Ascending aorta (tissue), 2 donors: ENCODE measurements at regions of chr17 and their contacts with region 1.

Region 1: DNA sequence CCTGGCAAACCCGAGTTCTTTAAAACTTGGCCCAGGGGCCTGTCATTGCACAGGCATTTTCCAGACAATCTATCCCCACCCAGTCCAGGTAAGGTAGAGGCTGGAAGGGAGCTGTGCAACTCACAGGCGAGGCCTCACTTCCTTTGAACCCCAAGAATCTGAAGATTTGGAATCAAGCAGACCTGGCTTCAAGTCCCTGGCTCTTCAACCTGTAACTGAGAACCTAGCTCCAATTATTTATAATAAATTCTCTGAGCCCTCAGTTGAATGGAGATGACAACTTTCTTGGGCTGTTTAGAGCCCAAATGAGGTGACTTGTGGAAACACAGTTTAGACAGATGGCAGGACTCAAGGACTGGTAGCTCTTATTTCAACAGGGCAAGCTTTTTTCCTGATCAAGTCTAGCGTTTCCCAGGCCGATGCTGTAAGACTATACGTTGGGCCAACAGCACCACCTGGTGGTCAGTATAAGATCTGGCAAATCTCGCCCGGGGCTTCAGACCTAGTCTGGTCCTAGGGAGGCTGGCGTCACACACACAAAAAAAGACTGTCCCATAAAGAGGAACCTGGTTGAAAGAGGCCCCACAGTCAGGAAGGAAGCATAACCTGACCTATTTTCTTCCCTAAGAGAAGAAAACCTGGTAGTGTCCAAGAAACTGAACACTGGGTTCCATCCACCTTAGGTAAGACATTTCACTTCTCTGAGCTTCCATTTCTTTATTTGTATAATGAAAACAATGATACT is 117.9 kb downstream of the C17orf67 start:
- DNase-seq: peak; percentile 50 to 89
- H3K4me3 ChIP-seq: no peak overlapping the region
- H3K27ac ChIP-seq: no peak overlapping the region
- H3K4me1 ChIP-seq: no peaks in the 10 kb centered on the region
- H3K27me3 ChIP-seq: no peaks in the 10 kb centered on the region
- CTCF ChIP-seq: peak; percentile 50 to 77 (median 74)

Region 2: GRCh38 chr17:56661916-56662315 is 53.9 kb before region 1 on chr17:
- intact Hi-C with region 1: no loop called
- DNase-seq: no peak
- H3K4me3 ChIP-seq: no peak overlapping the region
- H3K27ac ChIP-seq: no peak overlapping the region
- H3K4me1 ChIP-seq: no peaks in the 10 kb centered on the region
- H3K27me3 ChIP-seq: no peaks in the 10 kb centered on the region
- CTCF ChIP-seq: no peak

Region 3: GRCh38 chr17:56779898-56780733 is 64.3 kb after region 1 on chr17:
- intact Hi-C with region 1: loop called (anchors 1 kb)
- DNase-seq: peak in 1 of 2 donors; percentile 83
- H3K4me3 ChIP-seq: peak overlapping the region; percentile 43 to 54
- H3K27ac ChIP-seq: no peak overlapping the region
- H3K4me1 ChIP-seq: peaks cover 0 to 3% of the 10 kb centered on the region in 2 donors
- H3K27me3 ChIP-seq: no peaks in the 10 kb centered on the region
- CTCF ChIP-seq: peak; percentile 85 to 99 (median 98)